Activated CD8-positive, alpha-beta memory T cell treated with anti-CD3 and anti-CD28 coated beads, Interleukin-2, amount 10 ng/mL, durations not matched to agents 7 days and 5 days (primary cell): ENCODE measurements at regions of chr9 and their contacts with region 1.

Region 1: GRCh38 chr9:38088006-38088925 is 19.2 kb upstream of the SHB start:
- DNase-seq: peak; percentile 76
- ATAC-seq: peak; percentile 55
- H3K4me3 Mint-ChIP-seq: no peak overlapping the region
- H3K27ac Mint-ChIP-seq: no peak overlapping the region
- H3K4me1 Mint-ChIP-seq: no peaks in the 10 kb centered on the region
- H3K27me3 Mint-ChIP-seq: peaks cover 42% of the 10 kb centered on the region

Region 2: DNA sequence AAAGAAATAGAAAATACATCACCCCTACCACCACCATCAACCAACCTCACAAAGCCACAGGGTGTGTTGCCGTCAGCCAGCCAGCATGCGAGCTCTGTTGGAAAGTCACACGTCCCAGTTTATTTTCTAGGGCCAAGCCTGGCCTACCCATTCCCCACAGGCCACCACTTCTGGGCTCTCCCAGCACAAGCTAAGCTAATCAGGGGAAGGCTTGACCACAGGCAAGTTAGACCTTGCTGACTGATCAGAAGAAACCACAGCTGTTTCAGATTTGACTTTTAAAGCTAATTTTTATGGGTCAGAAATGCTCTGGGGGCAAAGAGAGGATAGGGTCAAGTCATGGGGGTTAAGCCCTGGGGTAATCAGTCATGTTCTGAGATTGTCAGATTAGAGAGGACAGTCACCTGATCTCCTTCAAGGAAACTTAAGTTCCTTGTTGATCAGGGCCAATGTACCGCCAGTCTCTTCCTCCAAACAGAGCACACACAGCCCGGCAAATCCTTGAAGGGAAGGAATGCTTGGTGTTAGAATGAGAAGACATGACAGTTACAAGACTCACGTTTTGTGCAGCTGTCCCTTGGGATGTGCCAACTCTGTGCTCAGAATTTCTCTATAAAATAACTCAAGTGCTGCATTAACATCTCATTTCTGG is 26.8 kb before region 1 on chr9:
- CTCF ChIA-PET with region 1: interaction called, 13 read pairs
- DNase-seq: no peak
- ATAC-seq: no peak
- H3K4me3 Mint-ChIP-seq: no peak overlapping the region
- H3K27ac Mint-ChIP-seq: no peak overlapping the region
- H3K4me1 Mint-ChIP-seq: peaks cover 12% of the 10 kb centered on the region
- H3K27me3 Mint-ChIP-seq: peaks cover 14% of the 10 kb centered on the region

Region 3: GRCh38 chr9:38107811-38108304 is 19.6 kb after region 1 on chr9:
- CTCF ChIA-PET with region 1: interaction called, 10 read pairs
- DNase-seq: peak; percentile 4
- ATAC-seq: no peak
- H3K4me3 Mint-ChIP-seq: no peak overlapping the region
- H3K27ac Mint-ChIP-seq: no peak overlapping the region
- H3K4me1 Mint-ChIP-seq: no peaks in the 10 kb centered on the region
- H3K27me3 Mint-ChIP-seq: peaks cover 18% of the 10 kb centered on the region